Dorsolateral prefrontal cortex (tissue), 120 donors: ENCODE measurements at regions of chr1 and their contacts with region 1.

Region 1: GRCh38 chr1:201114236-201115131 is 2.3 kb upstream of the CACNA1S start:
- DNase-seq: peak; percentile 75 to 94 (median 90)
- H3K4me3 ChIP-seq: peak overlapping the region; percentile 56 to 93 (median 73)
- H3K27ac ChIP-seq: peak overlapping the region in 47 of 59 donors; percentile 36 to 91 (median 63)
- H3K27me3 ChIP-seq: no peaks in the 10 kb centered on the region
- CTCF ChIP-seq: peak; percentile 49 to 93 (median 84)

Region 2: DNA sequence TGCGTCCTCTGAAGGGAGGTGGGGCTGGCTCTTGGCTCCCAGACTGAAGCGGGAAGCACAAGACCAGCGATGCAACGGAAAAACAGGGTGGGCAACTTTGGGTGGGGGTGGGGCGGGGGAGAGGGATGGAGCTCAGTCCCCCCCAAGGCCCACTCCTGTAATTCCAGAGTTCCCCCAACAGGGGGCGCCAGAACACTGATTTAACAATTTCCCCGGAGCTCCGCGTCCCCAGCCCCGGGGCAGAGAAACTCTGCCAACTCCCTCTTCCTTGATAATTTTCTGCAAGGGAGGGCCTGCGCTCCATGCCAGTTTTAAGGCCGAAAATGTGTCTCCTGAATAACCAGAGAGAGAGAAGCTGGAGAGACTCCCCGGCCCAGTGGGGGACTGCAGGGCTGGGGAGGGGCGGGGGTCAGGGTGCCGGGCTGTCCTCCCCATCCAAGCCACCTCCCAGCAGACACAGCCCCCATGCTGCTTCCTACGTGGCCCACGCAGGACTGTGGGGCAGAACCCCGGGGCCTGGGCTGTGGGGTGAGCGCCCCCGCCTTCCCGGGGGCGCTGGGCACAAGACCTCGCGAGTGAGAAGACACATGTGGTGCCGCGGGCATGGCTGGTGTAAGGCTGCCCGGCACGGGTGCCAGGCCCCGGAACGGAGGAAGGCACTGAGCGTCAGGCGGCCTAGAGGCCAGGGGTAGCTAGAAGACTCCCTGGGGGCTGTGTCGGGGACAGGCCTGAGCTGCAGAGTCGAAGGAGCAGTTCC is 142.4 kb before region 1 on chr1:
- intact Hi-C with region 1: loop called (anchors 2 kb)
- DNase-seq: peak; percentile 57 to 83 (median 74)
- H3K4me3 ChIP-seq: peak overlapping the region in 27 of 59 donors; percentile 3 to 48 (median 27)
- H3K27ac ChIP-seq: peak overlapping the region in 31 of 59 donors; percentile 10 to 79 (median 55)
- H3K27me3 ChIP-seq: no peaks in the 10 kb centered on the region
- CTCF ChIP-seq: peak; percentile 87 to 100 (median 98)

Region 3: DNA sequence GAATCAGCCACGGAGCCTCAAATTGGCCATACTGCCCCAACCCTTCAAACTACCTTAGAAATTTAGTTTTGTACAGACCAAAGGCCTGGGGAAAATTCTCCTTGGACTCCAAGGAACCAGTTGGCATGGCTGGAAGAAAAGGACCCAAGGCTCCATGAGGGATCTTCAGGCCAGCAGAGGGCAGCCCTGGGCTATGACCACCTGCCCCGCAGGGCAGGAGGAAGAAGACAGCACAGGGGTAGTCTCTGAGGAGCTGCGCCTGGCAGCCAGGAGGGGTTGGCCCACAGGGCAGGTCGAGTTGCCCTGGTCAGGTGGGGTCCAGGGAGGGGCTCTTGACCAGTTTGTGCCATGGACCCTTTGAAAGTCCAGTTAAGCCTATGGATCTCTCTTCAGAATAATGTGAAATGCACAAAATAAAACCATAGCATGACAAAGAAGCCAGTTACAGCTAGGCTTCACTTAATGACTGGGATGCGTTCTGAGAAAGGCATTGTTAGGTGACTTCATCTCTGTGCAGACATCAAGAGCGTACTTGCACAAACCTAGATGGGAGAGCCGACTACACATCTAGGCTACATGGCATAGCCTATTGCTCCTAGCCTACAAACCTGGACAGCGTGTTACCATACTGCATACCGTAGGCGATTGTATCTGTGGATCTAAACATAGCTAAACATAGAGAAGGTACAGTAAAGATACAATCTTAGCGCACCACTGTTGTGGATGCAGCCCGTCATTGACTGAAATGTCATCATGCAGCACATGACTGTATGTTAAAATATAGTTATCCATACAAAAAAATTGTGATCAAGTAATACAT is 28.4 kb before region 1 on chr1:
- intact Hi-C with region 1: loop called in 1 of 2 experiments (anchors 1 kb)
- DNase-seq: peak in 7 of 10 donors; percentile 15 to 66 (median 58)
- H3K4me3 ChIP-seq: no peak overlapping the region
- H3K27ac ChIP-seq: no peak overlapping the region
- H3K27me3 ChIP-seq: peaks cover 0 to 2% (median 0%) of the 10 kb centered on the region in 45 donors
- CTCF ChIP-seq: peak in 53 of 56 donors; percentile 33 to 75 (median 60)

Region 4: GRCh38 chr1:201170533-201171062 is 56.1 kb after region 1 on chr1:
- intact Hi-C with region 1: loop called in 1 of 2 experiments (anchors 5 kb)
- DNase-seq: peak; percentile 86 to 96 (median 92)
- H3K4me3 ChIP-seq: peak overlapping the region; percentile 59 to 98 (median 80)
- H3K27ac ChIP-seq: peak overlapping the region in 58 of 59 donors; percentile 2 to 94 (median 83)
- H3K27me3 ChIP-seq: no peaks in the 10 kb centered on the region
- CTCF ChIP-seq: peak in 21 of 56 donors; percentile 13 to 60 (median 28)